AG04449 (cell line): ENCODE measurements at regions of chr1 and their contacts with region 1.

Region 1: DNA sequence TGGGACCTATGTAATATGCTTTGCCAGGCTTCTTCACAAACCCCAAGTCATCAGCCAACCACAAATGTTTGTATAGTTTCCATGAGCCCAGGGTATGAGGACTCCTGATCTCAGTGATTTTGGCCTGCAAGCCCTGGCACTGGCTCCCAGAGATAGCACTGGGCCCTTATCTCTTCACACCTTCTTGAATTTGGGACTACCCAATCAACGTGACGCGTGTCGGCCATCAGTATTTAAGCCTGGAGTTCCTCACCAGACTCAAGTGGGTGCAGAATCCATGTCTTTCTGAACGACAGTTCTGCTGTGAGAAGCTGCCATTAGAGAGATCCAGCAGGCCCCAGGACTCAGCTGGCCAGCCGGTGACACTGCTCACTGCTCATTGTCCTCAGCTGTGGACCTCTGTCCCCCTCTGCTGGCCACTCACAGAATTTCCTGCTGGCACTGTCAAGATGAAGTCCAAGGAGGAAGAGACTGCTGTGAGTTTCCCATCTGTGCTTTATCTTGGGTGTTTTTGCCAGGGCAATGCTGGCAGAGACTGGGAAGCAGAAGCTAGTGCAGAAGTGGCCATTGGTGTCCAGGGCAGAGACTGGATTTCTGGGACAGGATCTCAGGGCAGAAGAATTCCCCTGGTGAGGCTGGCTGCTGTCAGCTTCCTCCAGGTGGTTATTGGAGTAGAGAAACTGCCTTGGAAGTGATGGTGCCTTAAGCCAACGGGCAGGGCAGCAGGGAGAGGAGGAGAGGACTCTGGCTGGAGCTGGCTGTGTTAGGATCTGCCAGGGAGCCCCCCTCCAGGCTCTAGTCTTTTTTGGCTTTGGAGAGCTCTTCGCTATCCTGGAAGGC is 28.4 kb downstream of the TMCC2 start:
- DNase-seq: peak; percentile 26
- H3K4me3 ChIP-seq: no peak overlapping the region
- CTCF ChIP-seq: peak; percentile 90

Region 2: GRCh38 chr1:204975570-204976235 is 280.5 kb before region 1 on chr1:
- CTCF ChIA-PET with region 1: interaction called, 178 read pairs
- POLR2A ChIA-PET with region 1: no interaction called
- DNase-seq: no peak
- H3K4me3 ChIP-seq: no peak overlapping the region
- CTCF ChIP-seq: peak; percentile 79

Region 3: DNA sequence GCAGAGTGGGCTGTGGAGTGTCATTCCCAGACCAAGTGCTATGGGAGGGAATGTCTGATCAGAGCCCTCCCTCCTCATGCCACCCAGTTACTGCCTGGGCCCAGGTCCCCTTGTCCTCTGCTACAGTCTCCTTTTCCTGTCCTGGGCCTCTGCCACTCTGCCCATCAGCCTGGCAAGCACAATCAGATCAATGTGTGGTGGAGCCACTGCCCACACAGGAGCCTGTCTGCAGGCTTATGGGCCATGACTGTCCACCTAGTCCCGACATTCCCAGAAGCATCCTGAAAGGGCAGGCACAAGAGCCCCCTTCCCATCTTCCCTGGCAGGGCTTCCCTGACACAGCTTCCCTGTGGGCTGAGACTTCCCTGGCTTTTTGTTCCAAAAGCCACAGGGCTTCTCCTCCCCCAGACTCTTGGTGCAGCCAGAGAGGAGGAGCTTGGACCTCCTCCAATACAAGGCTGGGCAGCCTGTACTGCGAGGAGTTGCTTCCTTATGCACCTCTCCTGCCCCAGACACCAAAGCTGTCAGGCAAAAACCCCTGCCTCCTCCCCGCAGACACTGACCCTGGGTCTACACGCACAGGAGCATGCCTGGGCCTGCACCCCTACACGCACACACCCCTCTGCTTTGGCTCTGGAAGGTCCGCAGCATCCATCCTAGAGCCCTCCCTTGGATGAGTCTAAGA is 242.3 kb before region 1 on chr1:
- CTCF ChIA-PET with region 1: interaction called, 11 read pairs
- POLR2A ChIA-PET with region 1: no interaction called
- DNase-seq: no peak
- H3K4me3 ChIP-seq: no peak overlapping the region
- CTCF ChIP-seq: no peak

Region 4: DNA sequence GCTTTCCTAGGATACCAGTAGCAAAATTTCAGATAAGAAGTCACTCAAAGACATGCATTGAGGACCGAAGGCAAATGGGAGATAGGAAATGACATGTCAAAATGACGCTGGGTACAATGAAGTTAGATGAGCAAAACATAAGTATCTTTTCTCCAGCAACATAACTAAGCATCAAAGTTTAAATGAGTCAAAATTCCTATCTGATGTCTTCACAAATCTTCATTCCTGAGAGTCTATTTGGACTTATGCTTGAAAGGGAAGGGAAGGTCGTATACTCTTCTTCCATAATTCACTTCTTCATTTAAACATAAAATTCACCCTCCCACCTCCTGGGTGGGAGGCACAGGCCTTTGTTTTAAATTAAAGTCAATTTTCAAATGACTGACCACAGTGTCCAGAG is 167.8 kb before region 1 on chr1:
- CTCF ChIA-PET with region 1: interaction called, 23 read pairs
- POLR2A ChIA-PET with region 1: interaction called, 3 read pairs
- DNase-seq: no peak
- H3K4me3 ChIP-seq: no peak overlapping the region
- CTCF ChIP-seq: no peak

Region 5: DNA sequence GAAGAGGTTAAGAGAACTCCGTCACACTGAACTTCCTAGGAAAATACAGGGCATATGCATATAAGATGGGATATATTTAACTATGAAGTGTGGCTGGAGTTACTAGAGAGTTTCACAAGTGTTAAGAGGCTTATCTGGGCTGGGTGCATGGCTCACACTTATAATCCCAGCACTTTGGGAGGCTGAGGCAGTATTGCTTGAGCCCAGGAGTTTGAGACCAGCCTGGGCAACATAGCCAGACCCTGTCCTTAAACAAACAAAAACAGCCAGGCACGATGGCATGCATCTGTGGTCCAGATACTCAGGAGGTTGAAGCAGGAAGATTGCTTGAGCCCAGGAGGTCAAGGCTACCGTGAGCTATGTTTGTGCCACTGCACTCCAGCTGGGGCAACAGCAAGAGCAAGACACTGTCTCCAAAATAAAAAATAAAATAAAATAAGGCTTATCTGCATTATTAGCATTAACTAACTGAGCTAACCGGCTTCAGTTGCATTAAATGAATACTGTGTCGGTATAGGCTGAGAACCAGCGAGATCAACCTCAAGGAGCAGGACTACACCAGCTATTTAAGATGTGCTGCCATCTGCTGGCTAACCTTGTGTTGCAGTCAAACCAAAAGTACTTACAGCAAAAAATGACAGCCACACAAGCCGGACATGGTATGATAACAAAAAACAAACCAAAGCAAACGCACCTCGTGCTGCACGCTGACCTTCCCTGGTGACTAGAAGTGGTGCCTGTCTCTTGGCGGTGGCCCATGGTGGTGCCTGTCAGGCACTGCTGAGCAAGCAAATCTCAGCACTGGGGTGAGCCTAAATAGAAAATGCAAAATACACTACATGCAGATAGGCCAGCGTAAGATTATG is 114.7 kb before region 1 on chr1:
- CTCF ChIA-PET with region 1: interaction called, 156 read pairs
- POLR2A ChIA-PET with region 1: no interaction called
- DNase-seq: peak; percentile 45
- H3K4me3 ChIP-seq: no peak overlapping the region
- CTCF ChIP-seq: peak; percentile 64

Region 6: DNA sequence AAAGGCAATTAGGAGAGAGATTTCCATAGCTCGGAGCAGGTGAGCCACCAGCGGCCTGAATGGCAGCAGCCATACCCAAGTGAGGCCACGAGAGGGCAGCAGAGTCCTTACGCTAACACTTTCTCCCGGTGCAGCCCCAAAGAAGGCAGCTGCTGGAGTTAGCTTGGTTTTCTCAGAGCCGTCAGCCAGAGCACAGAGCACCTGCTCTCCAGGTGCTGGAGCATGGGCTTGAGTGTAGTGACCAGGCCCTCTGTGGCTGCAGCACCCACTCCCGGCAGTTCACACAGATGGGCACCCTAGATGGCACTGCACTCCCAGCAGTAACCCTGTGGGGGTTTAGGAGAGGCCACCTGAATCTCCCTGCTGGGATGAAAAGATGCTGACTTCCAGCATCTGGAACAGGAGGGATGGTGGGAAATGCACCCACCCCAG is 17.4 kb after region 1 on chr1:
- CTCF ChIA-PET with region 1: interaction called, 163 read pairs
- POLR2A ChIA-PET with region 1: no interaction called
- DNase-seq: no peak
- H3K4me3 ChIP-seq: no peak overlapping the region
- CTCF ChIP-seq: peak; percentile 96